ENCODE measurements at regions of chr9 and their contacts with region 1.

Region 1: DNA sequence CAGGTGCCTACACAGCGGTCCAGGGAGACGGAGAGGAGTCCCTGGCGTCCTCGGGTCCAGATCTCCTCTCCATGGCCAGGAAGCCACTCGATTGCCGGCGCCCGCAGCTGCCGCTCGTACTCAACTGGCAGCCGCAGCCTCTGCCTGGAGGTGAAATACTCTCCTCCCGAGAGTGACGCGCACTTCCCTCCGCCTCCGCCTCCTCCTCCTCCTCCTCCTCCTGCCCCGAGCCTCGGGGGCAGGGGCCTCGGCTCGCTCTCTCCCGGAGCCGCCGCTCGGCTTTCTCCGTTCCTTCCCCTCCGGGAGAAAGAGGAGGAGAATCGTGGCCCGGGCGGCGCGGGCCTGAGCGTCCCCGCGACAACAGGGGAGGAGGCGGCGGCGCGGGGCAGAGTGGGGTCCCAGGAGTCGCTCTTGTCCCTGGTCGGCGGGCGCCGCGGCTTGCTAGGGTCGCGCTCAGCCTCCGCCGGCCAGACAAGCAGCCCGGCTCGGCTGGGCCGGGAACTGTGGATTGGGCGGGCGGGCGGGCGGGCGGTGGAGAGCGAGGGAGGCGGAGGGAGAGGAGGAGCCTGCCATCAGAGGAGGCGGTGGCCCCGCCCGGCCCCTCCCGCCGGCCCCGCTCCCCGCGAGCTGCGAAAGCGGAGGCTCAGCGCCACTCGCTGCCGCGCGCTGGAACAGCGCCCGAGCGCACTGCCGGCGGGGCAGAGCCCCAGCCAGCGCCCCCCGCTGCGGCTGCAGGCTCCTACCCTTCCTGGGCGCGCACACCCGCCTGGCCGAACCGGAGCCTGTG is at the start of gene CEMIP2:
- DNase-seq: peak; percentile 92
- ATAC-seq: peak; percentile 84
- H3K4me3 Mint-ChIP-seq: peak within 1 kb of the TSS; percentile 97
- H3K27ac Mint-ChIP-seq: peak within 1 kb of the TSS; percentile 93
- H3K4me1 Mint-ChIP-seq: peaks cover 38% of the 10 kb centered on the region
- H3K27me3 Mint-ChIP-seq: no peaks in the 10 kb centered on the region
- total RNA-seq, gene CEMIP2: 57.0 to 78.8 TPM

Region 2: DNA sequence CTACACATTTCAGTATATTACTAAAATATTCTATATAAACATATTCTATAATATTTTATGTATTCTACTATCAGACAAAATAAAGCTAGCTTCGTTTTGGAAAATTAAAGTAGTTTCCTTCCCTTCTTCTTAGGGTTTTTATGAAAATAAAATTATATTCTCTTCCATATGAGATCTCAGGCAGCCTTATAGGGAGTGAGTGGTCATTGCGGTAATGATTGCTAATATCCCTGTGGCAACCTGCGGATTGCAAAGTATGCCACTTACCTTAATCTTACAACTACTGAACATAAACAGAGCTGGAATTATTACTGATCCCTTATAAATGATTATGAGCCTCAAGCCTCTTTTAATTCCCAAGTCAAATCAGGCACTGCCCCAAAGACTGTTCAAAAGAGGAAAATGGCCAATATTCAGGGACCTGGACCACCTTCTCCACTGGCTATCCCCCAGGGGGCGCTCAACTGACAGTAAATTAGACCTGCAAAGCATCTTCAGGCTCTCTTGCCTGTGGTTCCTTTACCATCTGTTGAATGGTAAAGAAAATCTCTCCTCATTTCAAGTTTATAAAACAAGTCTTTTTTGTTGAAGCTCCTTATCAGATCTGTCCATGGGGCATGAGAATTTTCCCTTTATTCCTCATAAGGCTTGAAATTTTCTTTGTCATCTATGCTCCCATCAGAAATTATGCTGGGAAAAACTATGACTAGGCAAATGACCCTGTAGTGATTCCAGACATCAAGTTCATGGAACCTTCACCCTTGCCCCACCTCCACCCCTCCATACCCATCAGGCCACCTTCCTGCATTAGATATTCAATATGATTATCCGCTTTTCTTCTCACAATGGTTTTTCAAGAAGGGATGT is 164.2 kb before region 1 on chr9:
- CTCF ChIA-PET with region 1: interaction called, 16 read pairs
- DNase-seq: peak; percentile 87
- ATAC-seq: peak; percentile 97
- H3K4me3 Mint-ChIP-seq: no peak overlapping the region
- H3K27ac Mint-ChIP-seq: no peak overlapping the region
- H3K4me1 Mint-ChIP-seq: no peaks in the 10 kb centered on the region
- H3K27me3 Mint-ChIP-seq: no peaks in the 10 kb centered on the region

Region 3: DNA sequence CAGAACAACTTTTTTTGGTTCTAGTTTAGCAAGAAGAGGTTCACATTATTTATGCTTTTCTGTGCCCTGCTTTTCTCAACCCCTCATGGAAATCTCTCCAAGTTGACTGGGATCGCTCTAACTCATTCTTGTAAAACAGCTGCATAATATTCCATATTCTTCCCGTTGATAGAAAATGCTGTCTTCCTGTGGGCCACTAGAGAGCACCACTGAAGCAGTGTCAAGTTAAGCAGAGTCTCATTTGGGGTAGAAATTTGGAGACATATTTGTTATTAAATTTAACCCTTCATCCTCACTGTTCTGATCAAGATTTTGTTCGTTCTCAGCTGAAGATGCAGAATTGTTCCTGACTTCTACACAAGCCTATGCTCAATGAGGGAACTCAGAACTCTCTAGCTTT is 140.3 kb before region 1 on chr9:
- CTCF ChIA-PET with region 1: interaction called, 31 read pairs
- DNase-seq: no peak
- ATAC-seq: peak; percentile 70
- H3K4me3 Mint-ChIP-seq: no peak overlapping the region
- H3K27ac Mint-ChIP-seq: no peak overlapping the region
- H3K4me1 Mint-ChIP-seq: peaks cover 35% of the 10 kb centered on the region
- H3K27me3 Mint-ChIP-seq: peaks cover 6% of the 10 kb centered on the region

Region 4: DNA sequence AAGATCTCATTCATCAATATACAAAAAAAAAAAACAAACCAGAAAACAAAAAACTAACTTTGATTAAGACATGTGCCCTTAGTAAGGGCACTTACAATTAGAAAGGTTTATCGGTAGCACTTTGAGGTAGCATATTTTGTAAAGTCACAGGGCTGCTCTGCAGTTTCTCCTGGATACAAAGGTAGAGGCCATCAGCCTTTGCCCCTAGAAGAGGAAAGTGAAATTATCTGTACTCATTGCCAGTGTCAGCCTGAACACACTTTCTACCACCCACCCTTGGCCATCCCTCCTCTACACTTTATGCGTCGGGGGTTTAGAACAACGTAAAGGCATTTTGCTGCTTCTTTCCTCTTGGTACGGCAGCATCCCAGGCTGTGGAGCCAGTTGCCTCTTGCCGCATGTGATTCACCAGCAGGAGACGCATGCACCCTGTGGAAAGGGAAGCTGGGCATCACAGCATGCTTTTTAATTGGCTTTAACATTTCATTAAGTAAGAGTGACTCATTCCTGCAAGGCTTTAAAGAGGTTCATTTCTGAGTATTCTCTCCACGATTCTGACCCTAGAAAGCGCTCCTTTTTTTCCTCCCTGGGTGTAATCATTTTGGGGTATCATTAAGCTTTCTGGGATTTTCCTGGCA is 84.9 kb before region 1 on chr9:
- CTCF ChIA-PET with region 1: interaction called, 12 read pairs
- DNase-seq: no peak
- ATAC-seq: no peak
- H3K4me3 Mint-ChIP-seq: no peak overlapping the region
- H3K27ac Mint-ChIP-seq: peak overlapping the region; percentile 78
- H3K4me1 Mint-ChIP-seq: peaks cover 32% of the 10 kb centered on the region
- H3K27me3 Mint-ChIP-seq: no peaks in the 10 kb centered on the region

Region 5: DNA sequence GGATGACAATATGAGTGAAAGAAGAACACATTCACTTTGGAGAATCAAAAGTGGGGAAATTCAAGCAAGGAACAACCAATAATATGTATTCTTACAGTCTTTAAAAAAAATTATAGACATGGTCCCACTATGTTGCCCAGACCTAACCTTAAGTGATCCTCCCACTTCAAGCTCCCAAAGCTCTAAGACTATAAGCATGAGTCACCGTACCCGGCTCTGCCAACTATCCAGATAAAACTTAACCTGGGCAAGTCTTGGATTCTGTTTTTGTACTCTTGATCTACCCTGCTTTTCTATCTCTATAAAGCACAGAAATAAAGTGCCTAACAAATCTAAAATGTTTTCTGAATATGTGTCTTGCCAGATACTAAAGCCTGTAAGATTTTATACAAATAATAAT is 31.1 kb before region 1 on chr9:
- CTCF ChIA-PET with region 1: no interaction called
- DNase-seq: no peak
- ATAC-seq: no peak
- H3K4me3 Mint-ChIP-seq: no peak overlapping the region
- H3K27ac Mint-ChIP-seq: no peak overlapping the region
- H3K4me1 Mint-ChIP-seq: no peaks in the 10 kb centered on the region
- H3K27me3 Mint-ChIP-seq: no peaks in the 10 kb centered on the region

Region 6: GRCh38 chr9:71783120-71783530 is 14.5 kb after region 1 on chr9:
- CTCF ChIA-PET with region 1: interaction called, 75 read pairs
- DNase-seq: peak; percentile 94
- ATAC-seq: peak; percentile 93
- H3K4me3 Mint-ChIP-seq: peak overlapping the region; percentile 60
- H3K27ac Mint-ChIP-seq: peak overlapping the region; percentile 99
- H3K4me1 Mint-ChIP-seq: peaks cover 47% of the 10 kb centered on the region
- H3K27me3 Mint-ChIP-seq: no peaks in the 10 kb centered on the region